ENCODE measurements at regions of chr6 and their contacts with region 1.

Region 1: GRCh38 chr6:26596579-26597388 is at the start of gene ABT1:
- DNase-seq: peak; percentile 94 to 98
- H3K4me3 ChIP-seq: peak within 1 kb of the TSS; percentile 91
- H3K27ac ChIP-seq: peak within 1 kb of the TSS; percentile 48
- H3K4me1 ChIP-seq: 0 out of 2 replicates have a peak, but pooled peaks cover 8% of the 10 kb centered on the region
- H3K27me3 ChIP-seq: no peaks in the 10 kb centered on the region
- CTCF ChIP-seq: no peak
- total RNA-seq, gene ABT1: 16.8 and 19.5 TPM in 2 replicates

Region 2: DNA sequence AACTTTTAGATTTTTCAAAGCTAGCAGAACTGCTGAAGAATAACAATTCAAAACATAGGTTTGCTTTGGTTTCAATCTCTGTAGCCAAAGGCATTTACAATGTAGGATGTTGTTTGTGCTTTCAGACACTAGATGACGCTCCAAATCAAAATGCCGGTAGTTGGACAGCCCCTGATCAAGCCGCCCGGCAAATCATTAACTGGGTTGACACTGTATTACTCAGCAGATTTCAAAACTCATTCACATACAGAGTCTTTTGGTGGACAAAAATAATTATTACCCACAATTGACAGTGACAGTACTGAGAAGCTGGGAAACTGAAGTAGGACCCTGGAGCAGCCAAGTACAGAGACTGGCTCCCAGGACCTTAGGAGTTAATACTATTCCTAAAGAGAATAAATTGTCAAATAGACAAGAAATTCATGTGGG is 530.8 kb before region 1 on chr6:
- CTCF ChIA-PET with region 1: no interaction called
- POLR2A ChIA-PET with region 1: no interaction called
- intact Hi-C with region 1: loop called (anchors 1 kb)
- DNase-seq: peak; percentile 65 to 79
- H3K4me3 ChIP-seq: no peak overlapping the region
- H3K27ac ChIP-seq: peak overlapping the region; percentile 69
- H3K4me1 ChIP-seq: peaks cover 36% of the 10 kb centered on the region
- H3K27me3 ChIP-seq: no peaks in the 10 kb centered on the region
- CTCF ChIP-seq: peak; percentile 88

Region 3: GRCh38 chr6:26175428-26176181 is 421.2 kb before region 1 on chr6:
- CTCF ChIA-PET with region 1: no interaction called
- POLR2A ChIA-PET with region 1: no interaction called
- intact Hi-C with region 1: loop called (anchors 1 kb)
- DNase-seq: no peak
- H3K4me3 ChIP-seq: no peak overlapping the region
- H3K27ac ChIP-seq: no peak overlapping the region
- H3K4me1 ChIP-seq: peaks cover 23% of the 10 kb centered on the region
- H3K27me3 ChIP-seq: no peaks in the 10 kb centered on the region
- CTCF ChIP-seq: peak; percentile 82

Region 4: DNA sequence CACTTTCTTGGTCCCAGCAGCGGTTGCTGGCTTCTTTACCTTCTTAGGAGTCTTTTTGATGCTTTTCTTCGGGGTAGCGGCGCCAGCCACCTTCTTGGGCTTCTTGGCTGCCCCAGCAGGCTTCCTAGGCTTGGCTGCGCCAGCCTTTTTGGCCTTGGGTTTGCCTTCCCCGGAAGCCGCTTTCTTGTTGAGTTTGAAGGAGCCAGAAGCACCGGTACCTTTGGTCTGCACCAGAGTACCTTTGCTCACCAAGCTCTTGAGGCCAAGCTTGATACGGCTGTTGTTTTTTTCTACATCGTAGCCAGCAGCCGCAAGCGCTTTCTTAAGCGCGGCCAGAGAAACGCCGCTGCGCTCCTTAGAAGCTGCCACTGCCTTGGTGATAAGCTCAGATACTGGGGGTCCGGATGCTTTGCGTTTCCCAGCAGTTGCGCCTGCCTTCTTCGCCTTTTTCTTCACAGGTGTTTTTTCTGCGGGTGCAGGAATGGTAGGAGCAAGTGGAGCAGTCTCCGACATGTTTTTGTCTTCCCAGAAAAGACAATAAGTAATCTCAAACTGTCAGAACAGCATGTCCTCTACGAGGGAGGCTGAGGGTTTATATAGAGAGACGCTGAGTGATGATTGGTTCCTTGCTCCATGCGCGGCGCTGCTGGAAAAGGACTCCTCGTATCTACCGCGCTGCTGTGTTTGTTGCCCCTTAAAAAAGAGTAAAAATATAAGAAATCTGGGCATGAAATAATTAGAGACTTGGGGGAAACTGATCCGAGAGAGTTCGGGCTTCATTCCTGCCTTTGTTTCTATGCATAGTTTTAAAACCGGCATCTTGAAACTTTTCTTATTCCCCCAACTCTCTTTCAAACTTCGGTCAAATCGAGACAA is 362.1 kb before region 1 on chr6:
- CTCF ChIA-PET with region 1: no interaction called
- POLR2A ChIA-PET with region 1: interaction called, 16 read pairs
- intact Hi-C with region 1: no loop called
- DNase-seq: peak; percentile 61 to 66
- H3K4me3 ChIP-seq: peak overlapping the region; percentile 70
- H3K27ac ChIP-seq: peak overlapping the region; percentile 57
- H3K4me1 ChIP-seq: peaks cover 25% of the 10 kb centered on the region
- H3K27me3 ChIP-seq: no peaks in the 10 kb centered on the region
- CTCF ChIP-seq: no peak

Region 5: GRCh38 chr6:26329763-26330511 is 266.8 kb before region 1 on chr6:
- CTCF ChIA-PET with region 1: no interaction called
- POLR2A ChIA-PET with region 1: no interaction called
- intact Hi-C with region 1: no loop called
- DNase-seq: peak; percentile 69 to 71
- H3K4me3 ChIP-seq: peak overlapping the region; percentile 85
- H3K27ac ChIP-seq: peak overlapping the region; percentile 66
- H3K4me1 ChIP-seq: peaks cover 34% of the 10 kb centered on the region; the same call in 1 of the 2 replicates
- H3K27me3 ChIP-seq: no peaks in the 10 kb centered on the region
- CTCF ChIP-seq: no peak

Region 6: GRCh38 chr6:26537846-26538571 is 58.8 kb before region 1 on chr6 and contains the start of gene HMGN4:
- CTCF ChIA-PET with region 1: no interaction called
- POLR2A ChIA-PET with region 1: no interaction called
- intact Hi-C with region 1: loop called (anchors 2 kb)
- DNase-seq: peak; percentile 80 to 84
- H3K4me3 ChIP-seq: peak within 1 kb of the TSS; percentile 78
- H3K27ac ChIP-seq: peak within 1 kb of the TSS; percentile 78
- H3K4me1 ChIP-seq: peaks cover 18% of the 10 kb centered on the region
- H3K27me3 ChIP-seq: no peaks in the 10 kb centered on the region
- CTCF ChIP-seq: no peak
- total RNA-seq, gene HMGN4: 86.9 and 90.5 TPM in 2 replicates

Region 7: GRCh38 chr6:26576929-26577719 is 19.7 kb before region 1 on chr6:
- CTCF ChIA-PET with region 1: interaction called, 22 read pairs
- POLR2A ChIA-PET with region 1: interaction called, 3 read pairs
- intact Hi-C with region 1: loop called (anchors 1 kb)
- DNase-seq: peak; percentile 65 to 69
- H3K4me3 ChIP-seq: peak overlapping the region; percentile 60
- H3K27ac ChIP-seq: no peak overlapping the region
- H3K4me1 ChIP-seq: 0 out of 2 replicates have a peak, but pooled peaks cover 6% of the 10 kb centered on the region
- H3K27me3 ChIP-seq: no peaks in the 10 kb centered on the region
- CTCF ChIP-seq: no peak

Region 8: DNA sequence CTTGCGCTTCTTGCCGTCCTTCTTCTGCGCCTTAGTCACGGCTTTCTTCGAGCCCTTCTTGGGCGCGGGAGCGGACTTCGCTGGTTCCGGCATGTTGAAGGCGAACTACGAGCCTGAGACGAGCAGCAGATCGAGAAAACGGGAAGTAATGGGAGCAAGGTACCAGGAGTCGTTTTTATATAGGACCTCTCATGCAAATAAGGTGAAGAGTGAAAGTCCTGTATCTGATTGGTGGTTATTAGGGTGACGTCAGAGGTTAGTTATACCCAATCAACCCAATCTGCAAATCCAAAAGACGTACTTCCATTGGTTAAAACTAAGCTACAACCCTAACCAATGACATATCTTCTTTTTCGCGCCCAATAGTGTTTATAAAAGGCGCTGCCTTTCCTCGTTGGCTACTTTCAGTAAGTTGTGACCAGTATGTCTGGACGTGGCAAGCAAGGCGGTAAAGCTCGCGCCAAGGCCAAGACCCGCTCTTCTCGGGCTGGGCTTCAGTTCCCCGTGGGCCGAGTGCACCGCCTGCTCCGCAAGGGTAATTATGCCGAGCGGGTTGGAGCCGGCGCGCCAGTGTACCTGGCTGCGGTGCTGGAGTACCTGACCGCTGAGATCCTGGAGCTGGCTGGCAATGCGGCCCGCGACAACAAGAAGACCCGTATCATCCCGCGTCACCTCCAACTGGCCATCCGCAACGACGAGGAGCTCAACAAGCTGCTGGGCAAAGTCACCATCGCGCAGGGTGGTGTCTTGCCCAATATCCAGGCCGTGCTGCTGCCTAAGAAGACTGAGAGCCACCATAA is 550.1 kb after region 1 on chr6:
- CTCF ChIA-PET with region 1: no interaction called
- POLR2A ChIA-PET with region 1: no interaction called
- intact Hi-C with region 1: no loop called
- DNase-seq: peak; percentile 89 to 98
- H3K4me3 ChIP-seq: peak overlapping the region; percentile 91
- H3K27ac ChIP-seq: peak overlapping the region; percentile 75
- H3K4me1 ChIP-seq: peaks cover 2% of the 10 kb centered on the region; the same call in 1 of the 2 replicates
- H3K27me3 ChIP-seq: no peaks in the 10 kb centered on the region
- CTCF ChIP-seq: no peak